Cardiac septum (tissue), 1 donor: ENCODE measurements at regions of chr3 and their contacts with region 1.

Region 1: GRCh38 chr3:8111069-8111798 is 390.4 kb upstream of the LMCD1 start:
- DNase-seq: no peak

Region 2: GRCh38 chr3:7800006-7800780 is 311.0 kb before region 1 on chr3:
- intact Hi-C with region 1: loop called (anchors 5 kb)
- DNase-seq: no peak

Region 3: GRCh38 chr3:8143186-8143585 is 32.0 kb after region 1 on chr3:
- intact Hi-C with region 1: no loop called
- DNase-seq: no peak